ENCODE measurements at regions of chr17 and their contacts with region 1.

Region 1: GRCh38 chr17:42928714-42929496 is 28.3 kb downstream of the G6PC1 start:
- DNase-seq: peak; percentile 81
- H3K4me3 ChIP-seq: no peak overlapping the region
- H3K27ac ChIP-seq: peak overlapping the region; percentile 23
- H3K4me1 ChIP-seq: peaks cover 9% of the 10 kb centered on the region
- H3K27me3 ChIP-seq: peaks cover 0 to 3% of the 10 kb centered on the region in 2 experiments
- CTCF ChIP-seq: peak; percentile 53 to 57
- POLR2A ChIP-seq: no peak

Region 2: DNA sequence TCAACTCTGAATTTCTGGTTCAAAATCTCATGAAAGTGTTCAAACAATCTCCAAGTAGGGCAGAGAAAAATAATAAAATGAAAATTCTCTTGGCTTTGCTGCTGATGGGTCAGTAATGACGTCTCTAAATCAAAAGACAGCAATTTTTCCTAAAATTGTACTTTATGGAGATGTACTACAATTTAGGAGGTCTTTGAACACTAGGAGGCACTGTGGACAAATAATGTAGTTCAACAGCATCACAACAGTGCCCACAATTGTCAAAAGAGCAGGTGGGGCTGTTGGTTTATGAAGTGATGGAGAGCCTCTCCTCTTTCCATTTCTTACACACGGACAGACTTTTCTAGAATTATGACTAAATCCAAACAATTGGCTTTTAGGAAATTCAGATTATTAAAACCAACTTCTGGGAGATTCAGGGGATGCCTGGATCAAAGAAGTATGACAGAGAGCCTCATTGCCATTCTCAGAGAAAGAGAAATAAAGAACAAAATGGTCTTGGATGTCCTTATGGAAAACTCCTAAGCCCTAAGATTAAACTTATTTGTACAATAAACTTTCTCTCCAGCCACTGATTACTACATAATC is 207.8 kb before region 1 on chr17:
- CTCF ChIA-PET with region 1: interaction called, 3 read pairs
- POLR2A ChIA-PET with region 1: interaction called, 3 read pairs
- dilution Hi-C with region 1: no loop called
- intact Hi-C with region 1: loop called (anchors 2 kb)
- DNase-seq: peak; percentile 73
- H3K4me3 ChIP-seq: no peak overlapping the region
- H3K27ac ChIP-seq: no peak overlapping the region
- H3K4me1 ChIP-seq: no peaks in the 10 kb centered on the region
- H3K27me3 ChIP-seq: no peaks in the 10 kb centered on the region
- CTCF ChIP-seq: peak; percentile 47 to 52
- POLR2A ChIP-seq: no peak

Region 3: GRCh38 chr17:42843358-42843934 is 85.5 kb before region 1 on chr17:
- CTCF ChIA-PET with region 1: interaction called, 132 read pairs
- POLR2A ChIA-PET with region 1: interaction called, 3 read pairs
- dilution Hi-C with region 1: no loop called
- intact Hi-C with region 1: loop called (anchors 1 kb)
- DNase-seq: peak; percentile 69
- H3K4me3 ChIP-seq: no peak overlapping the region
- H3K27ac ChIP-seq: no peak overlapping the region
- H3K4me1 ChIP-seq: no peaks in the 10 kb centered on the region
- H3K27me3 ChIP-seq: no peaks in the 10 kb centered on the region
- CTCF ChIP-seq: peak; percentile 91 to 92
- POLR2A ChIP-seq: no peak

Region 4: GRCh38 chr17:42878123-42878880 is 50.6 kb before region 1 on chr17:
- CTCF ChIA-PET with region 1: interaction called, 19 read pairs
- POLR2A ChIA-PET with region 1: no interaction called
- dilution Hi-C with region 1: no loop called
- intact Hi-C with region 1: no loop called
- DNase-seq: no peak
- H3K4me3 ChIP-seq: no peak overlapping the region
- H3K27ac ChIP-seq: no peak overlapping the region
- H3K4me1 ChIP-seq: no peaks in the 10 kb centered on the region
- H3K27me3 ChIP-seq: peaks cover 5 to 7% of the 10 kb centered on the region in 2 experiments
- CTCF ChIP-seq: no peak
- POLR2A ChIP-seq: no peak

Region 5: GRCh38 chr17:42913522-42913921 is 15.4 kb before region 1 on chr17:
- CTCF ChIA-PET with region 1: interaction called, 11 read pairs
- POLR2A ChIA-PET with region 1: no interaction called
- dilution Hi-C with region 1: no loop called
- intact Hi-C with region 1: no loop called
- DNase-seq: no peak
- H3K4me3 ChIP-seq: no peak overlapping the region
- H3K27ac ChIP-seq: no peak overlapping the region
- H3K4me1 ChIP-seq: no peaks in the 10 kb centered on the region
- H3K27me3 ChIP-seq: peaks cover 0 to 10% of the 10 kb centered on the region in 2 experiments
- CTCF ChIP-seq: no peak
- POLR2A ChIP-seq: no peak